Psoas muscle (tissue), 8 donors: ENCODE measurements at regions of chr10 and their contacts with region 1.

Region 1: GRCh38 chr10:102960158-102960557 is 42.1 kb downstream of the CNNM2 start:
- DNase-seq: no peak
- ATAC-seq: no peak
- H3K4me3 ChIP-seq: no peak overlapping the region
- H3K27ac ChIP-seq: no peak overlapping the region
- H3K4me1 ChIP-seq: no peaks in the 10 kb centered on the region
- H3K27me3 ChIP-seq: no peaks in the 10 kb centered on the region
- CTCF ChIP-seq: no peak

Region 2: GRCh38 chr10:102467971-102468438 is 492.2 kb before region 1 on chr10:
- intact Hi-C with region 1: no loop called
- DNase-seq: peak in 1 of 2 donors; percentile 39
- ATAC-seq: no peak
- H3K4me3 ChIP-seq: no peak overlapping the region
- H3K27ac ChIP-seq: no peak overlapping the region
- H3K4me1 ChIP-seq: no peaks in the 10 kb centered on the region
- H3K27me3 ChIP-seq: no peaks in the 10 kb centered on the region
- CTCF ChIP-seq: no peak

Region 3: DNA sequence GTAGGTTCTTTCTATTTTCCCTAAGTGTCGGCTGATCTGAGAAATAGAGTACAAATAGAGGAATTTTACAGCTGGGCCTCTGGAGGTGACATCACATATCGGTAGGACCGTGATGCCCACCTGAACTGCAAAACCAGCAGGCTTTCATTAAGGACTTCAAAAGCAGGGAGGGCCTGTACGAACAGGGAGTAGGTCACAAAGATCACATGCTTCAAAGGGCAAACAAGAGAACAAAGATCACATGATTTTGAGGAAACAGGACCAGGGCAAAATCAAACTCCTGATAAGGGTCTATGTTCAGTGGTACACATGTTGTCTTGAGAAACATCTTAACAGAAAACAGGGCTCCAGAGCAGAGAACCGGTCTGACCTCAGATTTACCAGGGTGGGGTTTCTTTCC is 46.9 kb after region 1 on chr10:
- intact Hi-C with region 1: no loop called
- DNase-seq: no peak
- ATAC-seq: no peak
- H3K4me3 ChIP-seq: no peak overlapping the region
- H3K27ac ChIP-seq: no peak overlapping the region
- H3K4me1 ChIP-seq: no peaks in the 10 kb centered on the region
- H3K27me3 ChIP-seq: no peaks in the 10 kb centered on the region
- CTCF ChIP-seq: no peak

Region 4: GRCh38 chr10:103021897-103022286 is 61.7 kb after region 1 on chr10:
- intact Hi-C with region 1: loop called in 1 of 2 experiments (anchors 2 kb)
- DNase-seq: no peak
- ATAC-seq: no peak
- H3K4me3 ChIP-seq: no peak overlapping the region
- H3K27ac ChIP-seq: no peak overlapping the region
- H3K4me1 ChIP-seq: no peaks in the 10 kb centered on the region
- H3K27me3 ChIP-seq: no peaks in the 10 kb centered on the region
- CTCF ChIP-seq: no peak

Region 5: GRCh38 chr10:103040418-103040817 is 80.3 kb after region 1 on chr10:
- intact Hi-C with region 1: no loop called
- DNase-seq: no peak
- ATAC-seq: no peak
- H3K4me3 ChIP-seq: no peak overlapping the region
- H3K27ac ChIP-seq: no peak overlapping the region
- H3K4me1 ChIP-seq: peaks cover 3% of the 10 kb centered on the region
- H3K27me3 ChIP-seq: no peaks in the 10 kb centered on the region
- CTCF ChIP-seq: no peak